ENCODE measurements at regions of chr14 and their contacts with region 1.

Region 1: DNA sequence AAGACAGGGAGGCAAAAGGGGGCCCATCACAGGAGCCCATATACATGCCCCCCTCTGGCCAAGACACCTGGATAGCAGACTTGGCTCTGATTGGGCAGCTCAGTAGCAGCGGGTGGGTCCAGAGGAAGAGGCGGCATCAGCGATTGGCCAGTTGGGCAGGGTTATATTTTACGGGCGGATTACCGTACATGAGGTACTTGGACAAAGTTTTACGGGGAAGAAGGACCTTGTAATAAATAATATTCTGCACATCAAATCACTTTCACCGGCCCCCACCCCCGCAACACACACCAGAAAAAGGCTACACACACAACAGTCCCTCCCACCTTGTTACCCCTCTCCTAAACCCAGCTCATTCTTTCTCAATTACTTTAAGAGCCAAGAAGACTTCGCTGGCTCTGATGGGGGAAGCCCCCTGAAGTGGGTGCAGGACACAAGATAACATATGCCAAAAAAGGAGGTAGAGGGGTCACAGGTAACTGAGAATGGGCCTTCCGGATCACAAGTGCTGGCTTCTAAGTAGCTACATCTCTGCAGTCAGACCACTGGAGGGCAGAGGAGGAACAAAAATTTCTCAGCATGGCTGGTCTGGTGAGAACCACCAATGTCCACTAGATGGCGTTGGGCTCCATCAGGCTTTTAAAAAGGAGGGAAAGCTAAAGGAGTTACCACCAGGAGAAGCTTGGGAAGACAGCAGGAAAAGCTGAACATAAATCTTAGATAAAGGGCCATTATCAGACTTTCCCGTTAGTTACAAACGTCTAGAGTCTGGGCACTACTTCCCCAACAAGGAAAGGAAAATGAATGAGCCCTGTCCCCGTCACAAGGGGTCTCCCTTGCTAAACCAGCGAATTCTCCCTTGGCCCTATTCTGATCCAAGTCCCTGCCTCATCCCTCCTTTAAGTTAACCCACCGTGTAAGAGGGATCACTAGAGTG is 11.4 kb upstream of the CDH24 start:
- DNase-seq: peak; percentile 89
- H3K4me3 ChIP-seq: peak overlapping the region in 1 of 2 experiments; percentile 50; a peak in 1 of 4 replicates
- H3K27ac ChIP-seq: peak overlapping the region; percentile 35 to 40; a peak in 3 of 4 replicates
- H3K4me1 ChIP-seq: peaks cover 20 to 35% of the 10 kb centered on the region in 2 experiments
- H3K27me3 ChIP-seq: no peaks in the 10 kb centered on the region
- CTCF ChIP-seq: peak; percentile 99
- EP300 ChIP-seq: no peak
- RAD21 ChIP-seq: peak; percentile 77

Region 2: DNA sequence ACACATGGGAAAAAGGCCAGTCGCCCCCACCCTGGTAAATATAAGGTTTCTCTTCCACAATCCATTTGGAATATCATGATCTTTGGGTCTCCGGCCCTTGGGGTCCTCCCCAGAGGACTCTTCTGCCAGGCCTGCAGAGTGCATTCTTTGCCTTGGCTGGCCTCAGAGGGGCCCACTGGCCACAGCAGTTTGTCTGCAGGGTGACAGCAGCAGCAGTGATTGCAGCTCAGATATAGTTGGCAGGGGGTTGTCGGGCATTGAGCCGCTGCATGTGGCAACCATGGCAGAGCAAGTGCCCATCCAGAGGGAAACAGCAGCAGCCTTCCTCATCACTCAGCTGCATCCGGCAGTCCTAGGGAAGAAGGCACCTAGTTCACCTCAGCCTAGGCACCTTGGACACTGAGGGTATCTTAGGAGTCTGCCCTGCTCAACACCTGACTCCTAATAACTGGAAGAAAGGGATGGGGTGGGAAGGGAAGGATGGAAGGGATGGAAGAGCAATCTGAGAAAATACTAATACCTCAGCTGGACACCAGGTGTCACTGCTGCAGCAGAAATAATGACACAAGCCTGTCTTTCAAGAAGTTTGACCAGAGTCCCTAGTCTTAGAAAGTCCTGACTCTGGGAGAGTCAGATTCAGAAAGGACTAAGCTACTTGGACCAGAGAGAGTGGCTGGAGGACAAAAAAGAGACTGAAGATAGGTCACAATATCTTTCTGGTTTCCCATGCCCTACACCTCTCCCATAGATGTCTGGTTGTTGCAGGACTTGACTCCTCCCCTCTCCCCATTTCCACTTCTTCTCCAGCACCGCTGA is 95.3 kb before region 1 on chr14:
- CTCF ChIA-PET with region 1: interaction called, 1,566 read pairs
- POLR2A ChIA-PET with region 1: interaction called, 5 read pairs
- DNase-seq: peak; percentile 67
- H3K4me3 ChIP-seq: no peak overlapping the region
- H3K27ac ChIP-seq: no peak overlapping the region; a peak in 1 of 4 replicates
- H3K4me1 ChIP-seq: peaks cover 21 to 23% of the 10 kb centered on the region in 2 experiments
- H3K27me3 ChIP-seq: no peaks in the 10 kb centered on the region
- CTCF ChIP-seq: peak; percentile 71
- EP300 ChIP-seq: no peak
- RAD21 ChIP-seq: peak; percentile 88

Region 3: GRCh38 chr14:23006544-23007419 is 62.0 kb before region 1 on chr14:
- CTCF ChIA-PET with region 1: interaction called, 1,566 read pairs
- POLR2A ChIA-PET with region 1: interaction called, 5 read pairs
- DNase-seq: peak; percentile 97
- H3K4me3 ChIP-seq: peak overlapping the region; percentile 67 to 68
- H3K27ac ChIP-seq: peak overlapping the region; percentile 81 to 98
- H3K4me1 ChIP-seq: peaks cover 10 to 18% of the 10 kb centered on the region in 2 experiments
- H3K27me3 ChIP-seq: no peaks in the 10 kb centered on the region
- CTCF ChIP-seq: peak; percentile 32
- EP300 ChIP-seq: no peak
- RAD21 ChIP-seq: no peak

Region 4: DNA sequence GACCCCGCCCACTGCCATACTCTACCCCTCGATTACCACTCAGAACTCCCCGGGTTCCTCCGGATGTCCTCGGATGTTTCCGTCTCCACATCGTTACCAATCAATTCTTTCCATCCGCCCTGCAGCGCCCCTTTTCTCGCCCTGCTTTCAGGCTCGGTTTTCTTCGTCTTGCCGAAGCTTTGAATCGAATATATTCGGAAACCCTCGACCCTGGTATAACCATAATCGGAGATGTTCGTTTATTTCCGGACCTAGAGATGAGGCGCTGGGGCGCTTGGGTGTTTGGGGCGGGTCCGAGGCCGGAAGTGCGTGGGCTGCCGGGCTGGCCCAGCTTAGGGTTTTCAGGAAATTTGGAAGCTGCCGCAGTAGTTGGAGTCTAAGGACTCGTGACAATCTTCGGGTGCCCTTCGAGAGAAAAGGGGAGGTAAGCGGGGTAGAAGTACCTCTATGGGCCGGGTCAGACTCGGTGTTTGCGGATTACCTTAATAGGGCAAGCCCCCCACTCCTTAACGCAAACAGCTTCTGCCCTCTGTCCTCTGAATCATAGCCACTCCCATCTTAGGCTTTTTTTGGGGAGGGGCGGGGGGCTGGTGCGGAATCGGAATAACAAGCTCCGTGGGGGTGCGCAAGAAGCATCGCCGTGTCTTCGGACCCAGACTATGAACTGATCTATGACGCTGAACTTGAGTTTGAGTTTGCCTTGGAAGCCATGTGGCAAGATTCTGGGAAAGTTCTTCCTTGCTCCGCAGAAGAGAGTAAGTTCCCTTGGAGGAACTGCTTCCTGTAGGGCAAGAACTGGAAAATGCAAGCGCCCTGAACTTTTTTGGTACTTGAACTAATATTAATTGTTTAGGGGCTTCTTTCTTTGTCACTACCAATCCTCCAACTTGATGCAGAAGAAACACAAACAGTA is 26.7 kb after region 1 on chr14 and contains the start of gene C14orf119:
- CTCF ChIA-PET with region 1: interaction called, 26 read pairs
- POLR2A ChIA-PET with region 1: interaction called, 11 read pairs
- DNase-seq: peak; percentile 97
- H3K4me3 ChIP-seq: peak within 1 kb of the TSS; percentile 77 to 94
- H3K27ac ChIP-seq: peak within 1 kb of the TSS; percentile 93 to 96
- H3K4me1 ChIP-seq: peaks cover 7 to 20% of the 10 kb centered on the region in 2 experiments; a peak in 3 of 4 replicates
- H3K27me3 ChIP-seq: no peaks in the 10 kb centered on the region
- CTCF ChIP-seq: no peak
- EP300 ChIP-seq: no peak
- RAD21 ChIP-seq: no peak
- polyA plus RNA-seq, gene C14orf119: 55.2 and 73.3 TPM in 2 replicates

Region 5: GRCh38 chr14:23327947-23328744 is 259.4 kb after region 1 on chr14:
- CTCF ChIA-PET with region 1: no interaction called
- POLR2A ChIA-PET with region 1: no interaction called
- DNase-seq: peak; percentile 86
- H3K4me3 ChIP-seq: no peak overlapping the region
- H3K27ac ChIP-seq: no peak overlapping the region
- H3K4me1 ChIP-seq: peaks cover 3 to 4% of the 10 kb centered on the region in 2 experiments; a peak in 3 of 4 replicates
- H3K27me3 ChIP-seq: no peaks in the 10 kb centered on the region
- CTCF ChIP-seq: peak; percentile 93
- EP300 ChIP-seq: no peak
- RAD21 ChIP-seq: peak; percentile 96